Activated CD4-positive, alpha-beta memory T cell treated with anti-CD3 and anti-CD28 coated beads for 36 hours (primary cell): ENCODE measurements at regions of chr4 and their contacts with region 1.

Region 1: GRCh38 chr4:174156239-174156826 is 127.1 kb downstream of the FBXO8 start:
- DNase-seq: no peak
- H3K4me3 Mint-ChIP-seq: no peak overlapping the region
- H3K27ac Mint-ChIP-seq: no peak overlapping the region
- H3K4me1 Mint-ChIP-seq: no peaks in the 10 kb centered on the region
- H3K27me3 Mint-ChIP-seq: peaks cover 11% of the 10 kb centered on the region

Region 2: DNA sequence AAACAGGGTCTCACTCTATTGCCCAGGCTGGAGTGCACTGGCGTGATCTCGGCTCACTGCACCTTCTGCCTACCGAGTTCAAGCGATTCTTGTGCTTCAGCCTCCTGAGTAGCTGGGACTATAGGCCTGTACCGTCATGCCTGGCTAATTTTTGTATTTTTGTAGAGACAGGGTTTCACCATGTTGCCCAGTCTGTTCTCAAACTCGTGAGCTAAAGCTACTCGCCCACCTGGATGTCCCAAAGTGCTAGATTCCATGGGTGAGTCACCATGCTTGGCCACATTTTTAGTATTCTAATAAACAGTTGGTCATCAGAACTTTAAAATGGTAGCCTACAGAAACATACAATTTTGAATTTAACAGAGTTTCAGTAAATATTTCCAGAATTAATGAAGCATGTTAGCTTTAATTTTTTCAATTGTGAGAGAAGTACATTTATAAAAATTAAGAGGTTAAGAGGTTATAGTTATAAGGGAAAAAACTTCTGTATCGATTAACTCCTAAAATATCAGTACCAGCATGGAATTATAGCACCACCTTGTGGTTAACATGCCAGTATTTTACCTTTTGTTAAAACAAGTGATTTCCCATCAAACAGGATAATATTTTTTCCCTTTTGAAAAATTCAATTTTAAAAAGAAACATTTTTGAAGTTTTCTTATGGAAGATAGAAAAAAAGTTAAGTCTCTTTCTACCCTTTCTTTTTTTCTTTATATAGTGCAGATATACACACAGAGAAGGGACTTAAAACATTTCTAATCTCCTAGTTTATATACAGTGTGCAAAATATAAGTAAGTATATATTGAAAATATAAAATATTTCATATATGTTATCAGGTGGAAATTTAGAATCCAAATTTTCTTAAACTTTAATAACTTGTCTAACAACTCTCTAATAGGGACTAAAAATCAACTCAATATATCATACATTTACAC is 162.8 kb after region 1 on chr4:
- CTCF ChIA-PET with region 1: no interaction called
- POLR2A ChIA-PET with region 1: no interaction called
- intact Hi-C with region 1: loop called (anchors 5 kb)
- DNase-seq: no peak
- H3K4me3 Mint-ChIP-seq: no peak overlapping the region
- H3K27ac Mint-ChIP-seq: no peak overlapping the region
- H3K4me1 Mint-ChIP-seq: no peaks in the 10 kb centered on the region
- H3K27me3 Mint-ChIP-seq: no peaks in the 10 kb centered on the region